PC-9 (cell line): ENCODE measurements at regions of chr7 and their contacts with region 1.

Region 1: DNA sequence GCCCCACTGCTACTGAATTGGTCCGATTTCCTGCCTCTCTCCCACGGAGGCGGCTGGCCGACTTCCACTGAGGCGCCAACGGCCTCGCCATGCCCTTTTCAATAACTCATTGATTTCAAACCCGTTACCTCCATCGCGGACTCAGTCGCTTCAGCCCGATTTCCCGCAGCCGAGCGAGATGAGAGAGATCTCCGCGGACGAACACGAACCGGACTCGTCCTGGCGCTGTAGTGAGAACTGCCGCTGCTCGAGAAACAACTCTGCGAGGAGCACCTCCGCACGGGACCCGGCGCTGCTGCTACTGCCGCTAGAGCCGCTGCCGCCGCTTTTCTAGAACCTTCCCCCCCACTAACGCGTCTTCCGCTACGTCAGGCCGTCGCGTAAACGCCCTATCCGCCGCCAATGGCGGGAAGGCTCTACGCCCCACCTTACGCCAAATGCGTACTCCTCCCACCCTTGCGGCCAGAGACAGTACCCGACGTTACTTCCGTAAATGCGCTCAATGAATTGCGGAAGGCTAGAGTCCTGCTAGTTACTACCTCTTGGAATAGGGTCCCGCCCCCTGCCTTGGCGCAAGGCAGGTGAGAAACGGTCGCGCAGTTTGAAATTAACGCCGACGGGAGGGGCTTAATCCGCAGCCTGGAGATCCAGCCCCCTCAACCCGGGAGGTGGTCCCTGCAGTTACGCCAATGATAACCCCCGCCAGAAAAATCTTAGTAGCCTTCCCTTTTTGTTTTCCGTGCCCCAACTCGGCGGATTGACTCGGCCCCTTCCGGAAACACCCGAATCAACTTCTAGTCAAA is at the start of gene HNRNPA2B1:
- DNase-seq: peak; percentile 99
- H3K4me3 ChIP-seq: peak within 1 kb of the TSS; percentile 98
- H3K27ac ChIP-seq: peak within 1 kb of the TSS; percentile 92
- H3K4me1 ChIP-seq: peaks cover 45% of the 10 kb centered on the region
- H3K27me3 ChIP-seq: no peaks in the 10 kb centered on the region
- CTCF ChIP-seq: no peak
- total RNA-seq, gene HNRNPA2B1: 526 and 792 TPM in 2 replicates

Region 2: GRCh38 chr7:26052721-26053120 is 147.9 kb before region 1 on chr7:
- CTCF ChIA-PET with region 1: no interaction called
- POLR2A ChIA-PET with region 1: interaction called, 10 read pairs
- intact Hi-C with region 1: no loop called
- DNase-seq: peak in 1 of 2 experiments; percentile 86
- H3K4me3 ChIP-seq: no peak overlapping the region
- H3K27ac ChIP-seq: peak overlapping the region; percentile 7; the same call in 1 of the 2 replicates
- H3K4me1 ChIP-seq: peaks cover 9% of the 10 kb centered on the region
- H3K27me3 ChIP-seq: no peaks in the 10 kb centered on the region
- CTCF ChIP-seq: no peak

Region 3: DNA sequence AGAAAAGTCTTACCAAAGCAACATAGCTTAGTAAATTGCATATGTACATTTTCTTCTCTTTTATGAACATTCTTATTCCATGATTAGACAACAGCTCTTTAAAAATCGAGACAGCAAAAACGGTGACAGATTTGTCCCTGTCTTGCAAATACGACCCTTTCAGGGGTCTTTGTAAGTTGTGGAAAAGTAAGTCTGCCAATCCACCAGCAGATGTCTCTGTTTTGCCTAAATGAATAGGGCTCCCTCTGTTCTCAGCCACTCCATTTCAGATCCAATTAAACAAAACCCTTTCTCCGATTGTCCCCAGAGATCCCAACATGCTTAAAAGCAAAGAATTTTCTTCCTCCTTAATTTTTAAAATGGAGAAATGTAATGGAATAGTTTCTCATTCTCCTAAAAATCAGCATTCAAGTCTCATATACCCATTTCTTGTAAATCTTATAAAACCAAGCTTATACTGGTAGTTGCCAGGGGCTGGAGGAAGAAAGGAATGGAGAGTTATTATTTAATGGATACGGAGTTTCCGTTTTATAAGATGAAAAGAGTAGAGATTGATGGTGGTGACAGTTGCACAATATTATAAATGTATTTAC is 109.6 kb before region 1 on chr7:
- CTCF ChIA-PET with region 1: interaction called, 13 read pairs
- POLR2A ChIA-PET with region 1: interaction called, 4 read pairs
- intact Hi-C with region 1: loop called (anchors 1 kb)
- DNase-seq: peak in 1 of 2 experiments; percentile 50
- H3K4me3 ChIP-seq: no peak overlapping the region
- H3K27ac ChIP-seq: no peak overlapping the region
- H3K4me1 ChIP-seq: peaks cover 31% of the 10 kb centered on the region
- H3K27me3 ChIP-seq: no peaks in the 10 kb centered on the region
- CTCF ChIP-seq: peak; percentile 92

Region 4: DNA sequence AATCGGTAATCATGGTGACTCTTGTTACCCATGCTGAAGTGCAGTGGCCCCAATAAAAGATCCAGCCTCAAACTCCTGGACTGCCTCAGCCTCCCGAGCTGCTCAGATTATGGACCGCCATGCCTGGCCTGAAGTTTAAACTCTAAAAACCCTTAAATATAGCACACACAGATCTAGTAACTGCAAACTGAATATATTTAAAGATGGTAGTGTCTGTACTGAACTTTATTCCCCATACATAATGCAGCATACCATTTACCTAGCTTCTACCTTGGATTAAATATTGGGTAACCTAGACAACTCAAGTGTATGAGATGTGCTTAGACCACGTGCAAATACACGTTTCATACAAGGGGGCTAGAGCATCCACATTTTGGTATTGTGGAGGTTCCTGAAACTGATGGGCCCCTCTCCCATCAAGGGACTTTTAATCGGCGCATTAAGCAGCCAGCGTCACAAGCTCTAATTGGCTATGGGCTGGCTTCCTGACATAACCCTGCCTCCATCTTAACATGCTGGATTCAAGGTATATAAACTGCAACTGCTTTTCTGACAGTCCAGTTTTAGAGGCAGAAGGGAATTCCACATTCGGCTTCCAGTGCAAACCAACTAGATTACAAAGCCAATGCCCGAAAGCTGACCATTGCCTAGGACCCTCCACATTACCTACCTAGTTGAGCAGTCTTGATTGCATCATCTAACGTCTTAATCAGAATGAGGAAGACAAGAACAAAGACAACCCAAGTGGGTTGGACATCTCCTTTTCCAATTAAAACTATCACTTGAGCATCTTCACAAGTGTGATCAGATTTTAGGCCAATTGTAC is 13.1 kb before region 1 on chr7:
- CTCF ChIA-PET with region 1: interaction called, 16 read pairs
- POLR2A ChIA-PET with region 1: interaction called, 4 read pairs
- intact Hi-C with region 1: no loop called
- DNase-seq: no peak
- H3K4me3 ChIP-seq: no peak overlapping the region
- H3K27ac ChIP-seq: peak overlapping the region; percentile 41
- H3K4me1 ChIP-seq: peaks cover 3% of the 10 kb centered on the region; the same call in 1 of the 2 replicates
- H3K27me3 ChIP-seq: no peaks in the 10 kb centered on the region
- CTCF ChIP-seq: no peak

Region 5: DNA sequence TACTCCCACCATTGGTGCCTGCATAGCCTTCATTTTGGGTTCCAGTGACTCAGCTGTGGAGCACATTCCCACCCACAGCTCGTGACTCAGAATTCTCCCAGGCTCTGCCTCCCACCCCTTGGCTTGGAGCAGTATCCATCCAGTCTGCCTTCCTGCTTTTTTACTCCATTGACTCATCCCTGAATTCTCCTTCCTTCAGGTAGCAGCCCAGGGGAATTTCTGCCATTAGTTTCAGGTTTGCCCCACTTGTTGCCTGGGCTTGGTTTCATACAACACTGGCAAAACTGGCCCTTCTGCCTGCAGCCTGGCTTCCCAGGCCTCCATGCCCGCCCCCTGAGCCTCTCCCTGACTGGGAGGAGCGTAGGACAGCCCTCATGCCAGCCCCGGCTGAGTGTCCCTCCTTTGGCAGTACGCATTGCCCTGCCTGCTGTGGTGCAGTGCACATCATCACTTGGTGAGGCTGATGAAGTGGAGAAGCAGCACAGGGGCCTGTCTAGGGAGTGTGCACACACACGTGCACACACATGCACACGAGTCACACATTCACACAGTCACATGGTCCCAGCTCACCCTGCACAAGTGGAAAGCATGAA is 146.1 kb after region 1 on chr7:
- CTCF ChIA-PET with region 1: no interaction called
- POLR2A ChIA-PET with region 1: no interaction called
- intact Hi-C with region 1: loop called (anchors 2 kb)
- DNase-seq: peak; percentile 91 to 94
- H3K4me3 ChIP-seq: no peak overlapping the region
- H3K27ac ChIP-seq: peak overlapping the region; percentile 86
- H3K4me1 ChIP-seq: peaks cover 42% of the 10 kb centered on the region
- H3K27me3 ChIP-seq: no peaks in the 10 kb centered on the region
- CTCF ChIP-seq: no peak